ENCODE measurements at regions of chr5 and their contacts with region 1.

Region 1: GRCh38 chr5:111158105-111158744 is 66.0 kb upstream of the CAMK4 start:
- DNase-seq: peak; percentile 90
- ATAC-seq: peak; percentile 84
- H3K4me3 Mint-ChIP-seq: no peak overlapping the region
- H3K27ac Mint-ChIP-seq: no peak overlapping the region
- H3K4me1 Mint-ChIP-seq: peaks cover 12% of the 10 kb centered on the region
- H3K27me3 Mint-ChIP-seq: peaks cover 2% of the 10 kb centered on the region
- CTCF ChIP-seq: peak; percentile 100

Region 2: GRCh38 chr5:110817437-110817836 is 340.8 kb before region 1 on chr5:
- CTCF ChIA-PET with region 1: no interaction called
- POLR2A ChIA-PET with region 1: no interaction called
- intact Hi-C with region 1: no loop called
- DNase-seq: no peak
- ATAC-seq: no peak
- H3K4me3 Mint-ChIP-seq: no peak overlapping the region
- H3K27ac Mint-ChIP-seq: no peak overlapping the region
- H3K4me1 Mint-ChIP-seq: no peaks in the 10 kb centered on the region
- H3K27me3 Mint-ChIP-seq: peaks cover 6% of the 10 kb centered on the region
- CTCF ChIP-seq: no peak

Region 3: GRCh38 chr5:110894805-110895204 is 263.4 kb before region 1 on chr5:
- CTCF ChIA-PET with region 1: no interaction called
- POLR2A ChIA-PET with region 1: no interaction called
- intact Hi-C with region 1: no loop called
- DNase-seq: no peak
- ATAC-seq: no peak
- H3K4me3 Mint-ChIP-seq: no peak overlapping the region
- H3K27ac Mint-ChIP-seq: no peak overlapping the region
- H3K4me1 Mint-ChIP-seq: peaks cover 2% of the 10 kb centered on the region
- H3K27me3 Mint-ChIP-seq: peaks cover 6% of the 10 kb centered on the region
- CTCF ChIP-seq: no peak

Region 4: GRCh38 chr5:111169269-111169668 is 11.0 kb after region 1 on chr5:
- CTCF ChIA-PET with region 1: interaction called, 17 read pairs
- POLR2A ChIA-PET with region 1: no interaction called
- intact Hi-C with region 1: no loop called
- DNase-seq: no peak
- ATAC-seq: no peak
- H3K4me3 Mint-ChIP-seq: no peak overlapping the region
- H3K27ac Mint-ChIP-seq: no peak overlapping the region
- H3K4me1 Mint-ChIP-seq: no peaks in the 10 kb centered on the region
- H3K27me3 Mint-ChIP-seq: peaks cover 1% of the 10 kb centered on the region
- CTCF ChIP-seq: no peak

Region 5: DNA sequence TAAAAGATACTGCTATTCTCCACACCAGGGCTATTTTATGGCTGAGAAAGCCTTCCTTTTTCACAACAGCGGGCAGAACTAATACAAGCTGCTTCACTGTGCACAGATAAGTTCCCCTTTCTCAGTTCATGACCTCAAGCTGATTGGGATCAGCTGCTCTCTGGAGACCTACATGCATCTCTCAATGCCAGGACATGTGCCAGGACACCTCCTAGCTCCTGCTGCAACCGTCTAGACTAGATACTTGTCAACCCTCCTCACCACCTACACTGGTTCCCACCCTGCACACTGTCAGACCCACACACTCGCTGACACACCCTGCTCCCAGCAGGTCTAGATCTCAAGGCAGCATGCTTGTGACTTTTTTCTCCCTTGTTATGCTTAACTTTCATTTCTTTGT is 314.4 kb after region 1 on chr5:
- CTCF ChIA-PET with region 1: interaction called, 5 read pairs
- POLR2A ChIA-PET with region 1: no interaction called
- intact Hi-C with region 1: loop called (anchors 10 kb)
- DNase-seq: no peak
- ATAC-seq: no peak
- H3K4me3 Mint-ChIP-seq: no peak overlapping the region
- H3K27ac Mint-ChIP-seq: peak overlapping the region; percentile 58
- H3K4me1 Mint-ChIP-seq: peaks cover 7% of the 10 kb centered on the region
- H3K27me3 Mint-ChIP-seq: no peaks in the 10 kb centered on the region
- CTCF ChIP-seq: no peak